CD8-positive, alpha-beta T cell (primary cell): ENCODE measurements at regions of chr2 and their contacts with region 1.

Region 1: GRCh38 chr2:190929919-190930318 is 49.3 kb downstream of the GLS start:
- DNase-seq: no peak
- ATAC-seq: no peak
- H3K4me3 ChIP-seq: no peak overlapping the region
- H3K4me3 Mint-ChIP-seq: no peak overlapping the region
- H3K27ac ChIP-seq: no peak overlapping the region
- H3K27ac Mint-ChIP-seq: no peak overlapping the region
- H3K4me1 ChIP-seq: no peaks in the 10 kb centered on the region
- H3K4me1 Mint-ChIP-seq: peaks cover 7% of the 10 kb centered on the region
- H3K27me3 ChIP-seq: no peaks in the 10 kb centered on the region
- H3K27me3 Mint-ChIP-seq: no peaks in the 10 kb centered on the region
- CTCF ChIP-seq: no peak

Region 2: DNA sequence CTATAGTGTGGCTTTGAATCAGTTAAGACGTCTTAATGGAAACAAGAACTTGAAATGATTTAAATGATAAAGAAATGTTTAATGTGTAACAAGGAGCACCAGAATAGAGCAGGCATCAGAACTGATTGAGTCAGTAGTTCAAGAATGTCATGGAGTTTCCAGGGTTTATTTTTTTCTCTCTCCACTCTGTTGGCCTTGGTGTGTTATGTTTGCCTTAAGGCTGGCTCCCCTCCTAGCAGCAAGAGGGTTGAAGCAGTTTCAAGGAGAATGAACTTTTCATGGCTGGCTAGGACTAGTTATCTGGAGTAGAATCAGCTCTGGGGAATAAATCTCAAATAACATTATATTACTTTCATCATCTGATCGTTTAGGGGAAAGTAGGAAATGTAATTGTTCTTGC is 62.7 kb before region 1 on chr2:
- CTCF ChIA-PET with region 1: no interaction called
- POLR2A ChIA-PET with region 1: no interaction called
- intact Hi-C with region 1: no loop called
- DNase-seq: no peak
- ATAC-seq: no peak
- H3K4me3 ChIP-seq: no peak overlapping the region
- H3K4me3 Mint-ChIP-seq: no peak overlapping the region
- H3K27ac ChIP-seq: no peak overlapping the region
- H3K27ac Mint-ChIP-seq: no peak overlapping the region
- H3K4me1 ChIP-seq: peaks cover 17% of the 10 kb centered on the region
- H3K4me1 Mint-ChIP-seq: peaks cover 20% of the 10 kb centered on the region
- H3K27me3 ChIP-seq: no peaks in the 10 kb centered on the region
- H3K27me3 Mint-ChIP-seq: no peaks in the 10 kb centered on the region
- CTCF ChIP-seq: no peak

Region 3: GRCh38 chr2:190896477-190896876 is 33.4 kb before region 1 on chr2:
- CTCF ChIA-PET with region 1: interaction called, 3 read pairs
- POLR2A ChIA-PET with region 1: interaction called, 3 read pairs
- intact Hi-C with region 1: loop called in 1 of 2 experiments (anchors 5 kb)
- DNase-seq: no peak
- ATAC-seq: no peak
- H3K4me3 ChIP-seq: no peak overlapping the region
- H3K4me3 Mint-ChIP-seq: no peak overlapping the region
- H3K27ac ChIP-seq: no peak overlapping the region
- H3K27ac Mint-ChIP-seq: peak overlapping the region; percentile 10
- H3K4me1 ChIP-seq: peaks cover 15% of the 10 kb centered on the region
- H3K4me1 Mint-ChIP-seq: peaks cover 39% of the 10 kb centered on the region
- H3K27me3 ChIP-seq: no peaks in the 10 kb centered on the region
- H3K27me3 Mint-ChIP-seq: no peaks in the 10 kb centered on the region
- CTCF ChIP-seq: no peak

Region 4: DNA sequence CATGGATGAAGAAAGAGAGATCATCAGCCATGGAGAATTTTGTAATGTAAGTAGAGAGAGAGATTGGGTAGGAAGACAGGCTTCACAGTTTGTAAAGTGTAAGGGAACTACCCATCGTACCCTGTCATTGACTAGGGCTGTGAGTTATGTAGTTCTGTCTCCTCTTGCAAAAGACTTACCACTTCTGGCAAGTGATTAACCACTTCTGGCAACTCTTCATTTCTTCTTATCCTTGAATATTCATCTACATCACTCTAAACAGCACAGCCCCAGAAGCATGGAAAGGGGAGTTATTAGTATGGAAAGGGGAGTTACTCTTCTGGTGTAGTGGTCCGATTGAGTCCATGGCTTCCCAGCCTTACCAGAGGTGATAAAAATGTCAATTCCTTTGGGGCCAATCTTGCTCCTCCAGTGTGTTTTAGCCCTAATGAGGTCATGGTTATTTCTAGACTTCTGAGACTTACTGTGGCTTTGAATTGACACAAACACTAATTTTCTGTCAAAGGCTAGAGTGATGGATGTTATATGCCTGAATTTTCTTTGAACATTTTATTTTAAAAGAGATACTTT is 32.1 kb after region 1 on chr2:
- CTCF ChIA-PET with region 1: no interaction called
- POLR2A ChIA-PET with region 1: no interaction called
- intact Hi-C with region 1: loop called in 1 of 2 experiments (anchors 5 kb)
- DNase-seq: no peak
- ATAC-seq: peak; percentile 20
- H3K4me3 ChIP-seq: no peak overlapping the region
- H3K4me3 Mint-ChIP-seq: no peak overlapping the region
- H3K27ac ChIP-seq: peak overlapping the region in 1 of 2 experiments; percentile 14
- H3K27ac Mint-ChIP-seq: peak overlapping the region; percentile 63
- H3K4me1 ChIP-seq: no peaks in the 10 kb centered on the region
- H3K4me1 Mint-ChIP-seq: peaks cover 39% of the 10 kb centered on the region
- H3K27me3 ChIP-seq: no peaks in the 10 kb centered on the region
- H3K27me3 Mint-ChIP-seq: no peaks in the 10 kb centered on the region
- CTCF ChIP-seq: no peak

Region 5: GRCh38 chr2:191003405-191004309 is 73.7 kb after region 1 on chr2:
- CTCF ChIA-PET with region 1: no interaction called
- POLR2A ChIA-PET with region 1: no interaction called
- intact Hi-C with region 1: no loop called
- DNase-seq: no peak
- ATAC-seq: no peak
- H3K4me3 ChIP-seq: no peak overlapping the region
- H3K4me3 Mint-ChIP-seq: no peak overlapping the region
- H3K27ac ChIP-seq: peak overlapping the region in 1 of 2 experiments; percentile 18
- H3K27ac Mint-ChIP-seq: peak overlapping the region; percentile 86
- H3K4me1 ChIP-seq: peaks cover 22% of the 10 kb centered on the region
- H3K4me1 Mint-ChIP-seq: peaks cover 68% of the 10 kb centered on the region
- H3K27me3 ChIP-seq: no peaks in the 10 kb centered on the region
- H3K27me3 Mint-ChIP-seq: no peaks in the 10 kb centered on the region
- CTCF ChIP-seq: no peak